Breast epithelium (tissue), 4 donors: ENCODE measurements at regions of chr19 and their contacts with region 1.

Region 1: GRCh38 chr19:41116261-41116660 is 2.0 kb downstream of the CYP2F1 start:
- DNase-seq: no peak
- H3K4me3 ChIP-seq: no peak overlapping the region
- H3K27ac ChIP-seq: no peak overlapping the region
- H3K4me1 ChIP-seq: no peaks in the 10 kb centered on the region
- H3K27me3 ChIP-seq: no peaks in the 10 kb centered on the region
- CTCF ChIP-seq: no peak
- POLR2A ChIP-seq: no peak

Region 2: GRCh38 chr19:39813264-39813993 is 1302.8 kb before region 1 on chr19:
- intact Hi-C with region 1: loop called (anchors 5 kb)
- DNase-seq: no peak
- H3K4me3 ChIP-seq: no peak overlapping the region
- H3K27ac ChIP-seq: no peak overlapping the region
- H3K4me1 ChIP-seq: no peaks in the 10 kb centered on the region
- H3K27me3 ChIP-seq: no peaks in the 10 kb centered on the region
- CTCF ChIP-seq: no peak
- POLR2A ChIP-seq: no peak